ENCODE measurements at regions of chr9 and their contacts with region 1.

Region 1: DNA sequence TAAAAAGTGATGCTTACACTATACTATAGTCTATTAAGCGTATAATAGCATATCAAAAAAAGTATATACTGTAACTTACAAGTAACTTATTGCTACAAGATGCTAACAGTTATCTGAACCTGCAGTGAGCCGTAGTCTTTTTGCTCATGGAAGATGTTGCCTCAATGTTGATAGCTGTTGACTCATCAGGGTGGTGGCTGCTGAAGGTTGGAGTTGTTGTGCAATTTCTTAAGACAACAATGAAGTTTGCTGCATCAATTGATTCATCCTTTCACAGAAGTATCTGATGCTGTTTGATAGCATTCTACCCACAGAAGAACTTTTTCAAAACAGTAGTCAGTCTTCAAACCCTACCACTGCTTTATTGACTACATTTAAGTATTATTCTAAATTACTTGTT is 7.9 kb upstream of the C9orf40 start:
- DNase-seq: peak; percentile 80
- H3K4me3 ChIP-seq: no peak overlapping the region
- H3K27ac ChIP-seq: no peak overlapping the region
- H3K4me1 ChIP-seq: no peaks in the 10 kb centered on the region
- H3K27me3 ChIP-seq: no peaks in the 10 kb centered on the region
- CTCF ChIP-seq: no peak

Region 2: GRCh38 chr9:74887041-74887980 is 73.3 kb before region 1 on chr9 and contains the start of gene TRPM6:
- CTCF ChIA-PET with region 1: no interaction called
- dilution Hi-C with region 1: no loop called
- in situ Hi-C with region 1: loop called in 1 of 2 experiments (anchors 5 kb)
- intact Hi-C with region 1: no loop called
- DNase-seq: peak; percentile 78
- H3K4me3 ChIP-seq: peak within 1 kb of the TSS; percentile 60 to 85 (median 63)
- H3K27ac ChIP-seq: no peak within 1 kb of the TSS
- H3K4me1 ChIP-seq: peaks cover 3% of the 10 kb centered on the region
- H3K27me3 ChIP-seq: no peaks in the 10 kb centered on the region
- CTCF ChIP-seq: no peak
- total RNA-seq, gene TRPM6: 1.5 to 3.0 TPM

Region 3: GRCh38 chr9:74901001-74901400 is 59.6 kb before region 1 on chr9:
- CTCF ChIA-PET with region 1: no interaction called
- dilution Hi-C with region 1: no loop called
- in situ Hi-C with region 1: no loop called
- intact Hi-C with region 1: no loop called
- DNase-seq: no peak
- H3K4me3 ChIP-seq: no peak overlapping the region
- H3K27ac ChIP-seq: no peak overlapping the region
- H3K4me1 ChIP-seq: no peaks in the 10 kb centered on the region
- H3K27me3 ChIP-seq: no peaks in the 10 kb centered on the region
- CTCF ChIP-seq: no peak

Region 4: GRCh38 chr9:75001719-75002422 is 41.3 kb after region 1 on chr9:
- CTCF ChIA-PET with region 1: no interaction called
- dilution Hi-C with region 1: no loop called
- in situ Hi-C with region 1: no loop called
- intact Hi-C with region 1: loop called (anchors 1 kb)
- DNase-seq: peak; percentile 58
- H3K4me3 ChIP-seq: no peak overlapping the region
- H3K27ac ChIP-seq: no peak overlapping the region
- H3K4me1 ChIP-seq: no peaks in the 10 kb centered on the region
- H3K27me3 ChIP-seq: no peaks in the 10 kb centered on the region
- CTCF ChIP-seq: peak; percentile 67 to 68